GM18951 (cell line): ENCODE measurements at regions of chr18 and their contacts with region 1.

Region 1: DNA sequence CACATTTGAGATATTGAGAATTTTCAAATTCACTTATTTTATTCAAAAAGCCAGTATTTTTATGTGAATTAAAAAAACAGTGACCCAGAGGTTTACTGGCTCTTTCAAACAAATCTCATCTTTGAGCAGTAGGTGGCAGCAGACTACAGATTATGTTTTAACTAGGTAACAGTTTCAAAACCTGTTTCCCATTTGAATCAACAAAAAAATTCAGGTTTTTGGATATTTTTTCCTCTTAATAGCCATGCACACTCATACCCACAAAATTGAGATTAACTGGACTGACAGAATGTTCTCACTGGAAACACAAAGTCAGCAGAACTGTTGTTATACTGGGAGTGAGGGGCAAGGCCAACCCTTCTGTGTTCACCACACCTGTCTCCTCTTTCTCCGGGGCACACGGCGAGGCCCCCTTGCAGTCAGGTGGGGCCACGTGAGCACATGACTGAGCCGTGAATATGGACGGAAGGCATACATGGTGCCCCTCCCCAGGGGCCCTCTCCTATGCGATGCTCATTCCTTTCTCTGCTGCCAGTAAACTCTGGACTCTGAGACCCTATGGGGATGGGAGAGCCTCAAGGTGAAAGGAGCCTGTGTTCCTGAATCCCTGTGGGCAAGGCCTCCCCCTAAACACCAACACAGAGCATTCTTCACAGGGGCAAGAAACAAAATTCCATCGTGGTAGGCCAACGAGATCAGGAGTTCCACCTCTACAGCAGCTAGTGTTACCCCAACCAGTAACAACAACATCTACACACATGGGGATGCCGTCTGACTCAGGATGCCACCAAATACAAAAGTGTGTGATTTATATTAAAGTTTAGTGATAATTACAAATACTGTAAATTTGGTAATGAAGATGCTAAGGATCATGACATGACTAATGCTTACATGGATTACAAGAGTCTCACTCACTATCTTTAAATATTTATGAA is 80.4 kb downstream of the LPIN2 start:
- POLR2A ChIP-seq: no peak

Region 2: DNA sequence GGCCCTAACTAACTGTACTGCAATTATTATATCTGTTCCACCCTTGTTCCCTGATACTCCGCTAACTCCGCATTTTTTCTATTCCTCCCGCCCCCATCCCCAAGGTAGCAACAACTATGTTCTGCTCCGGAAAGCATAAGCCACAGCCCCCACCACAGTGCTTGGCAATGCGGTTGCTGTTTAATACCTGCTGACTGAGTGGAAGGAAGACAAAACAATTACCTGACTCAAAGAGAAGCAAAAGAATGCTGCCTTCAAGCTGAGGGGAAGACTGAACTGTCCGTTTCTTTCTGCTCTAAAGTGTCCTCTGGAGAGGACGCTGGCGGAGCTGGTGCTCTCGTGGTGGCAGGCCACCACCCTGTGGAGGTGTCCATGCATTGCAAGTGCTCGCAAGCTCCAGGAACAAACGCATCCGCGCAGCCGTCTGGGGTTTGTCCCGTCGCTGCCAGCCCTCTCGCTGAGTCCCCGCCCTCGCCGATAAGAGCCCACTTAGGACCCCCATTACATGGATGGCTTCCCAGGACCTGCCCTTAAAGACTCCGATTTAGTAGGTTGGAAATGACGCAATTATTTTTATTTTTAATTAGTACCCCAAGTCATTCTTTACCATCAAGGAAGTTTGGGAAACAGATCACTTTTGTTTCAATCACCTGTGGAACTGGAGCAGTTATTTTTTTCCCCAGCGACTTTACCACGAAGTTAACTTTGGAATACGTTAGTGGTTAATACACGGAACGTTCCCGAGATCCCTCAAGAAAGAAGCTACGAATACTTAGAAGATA is 313.5 kb after region 1 on chr18:
- in situ Hi-C with region 1: loop called (anchors 5 kb)
- POLR2A ChIP-seq: no peak

Region 3: GRCh38 chr18:3493501-3494244 is 561.2 kb after region 1 on chr18:
- in situ Hi-C with region 1: no loop called
- POLR2A ChIP-seq: no peak